ENCODE measurements at regions of chr18 and their contacts with region 1.

Region 1: GRCh38 chr18:35215026-35215425 is 25.8 kb upstream of the ZNF397 start:
- DNase-seq: no peak
- H3K4me3 ChIP-seq: no peak overlapping the region
- H3K27ac ChIP-seq: no peak overlapping the region
- H3K4me1 ChIP-seq: no peaks in the 10 kb centered on the region
- H3K27me3 ChIP-seq: peaks cover 3 to 10% of the 10 kb centered on the region in 2 experiments
- CTCF ChIP-seq: no peak
- POLR2A ChIP-seq: no peak

Region 2: GRCh38 chr18:35110554-35111485 is 104.2 kb before region 1 on chr18:
- CTCF ChIA-PET with region 1: no interaction called
- POLR2A ChIA-PET with region 1: no interaction called
- dilution Hi-C with region 1: no loop called
- intact Hi-C with region 1: no loop called
- DNase-seq: peak; percentile 86
- H3K4me3 ChIP-seq: no peak overlapping the region
- H3K27ac ChIP-seq: no peak overlapping the region
- H3K4me1 ChIP-seq: peaks cover 11% of the 10 kb centered on the region
- H3K27me3 ChIP-seq: no peaks in the 10 kb centered on the region
- CTCF ChIP-seq: no peak
- POLR2A ChIP-seq: no peak

Region 3: DNA sequence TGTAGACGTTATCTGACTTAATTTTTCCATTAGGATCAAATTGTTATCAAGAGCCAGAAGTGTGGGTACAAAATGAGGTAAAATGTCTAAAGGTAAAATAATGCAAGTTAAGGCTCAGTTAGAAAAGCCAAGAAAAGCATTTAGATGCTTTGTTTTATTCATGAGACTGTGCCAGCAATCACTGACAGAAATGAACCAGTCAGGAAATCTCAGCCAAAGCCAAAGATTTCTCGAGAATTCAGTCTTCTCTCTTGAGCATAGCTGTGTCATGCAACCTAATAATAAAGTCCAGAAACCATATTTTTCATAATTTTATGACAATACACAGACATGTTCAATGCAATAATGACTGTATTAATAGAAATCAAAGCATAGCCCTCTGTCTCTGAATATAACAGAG is 17.7 kb before region 1 on chr18:
- CTCF ChIA-PET with region 1: interaction called, 4 read pairs
- POLR2A ChIA-PET with region 1: no interaction called
- dilution Hi-C with region 1: no loop called
- intact Hi-C with region 1: loop called (anchors 2 kb)
- DNase-seq: no peak
- H3K4me3 ChIP-seq: no peak overlapping the region
- H3K27ac ChIP-seq: no peak overlapping the region
- H3K4me1 ChIP-seq: no peaks in the 10 kb centered on the region
- H3K27me3 ChIP-seq: no peaks in the 10 kb centered on the region
- CTCF ChIP-seq: no peak
- POLR2A ChIP-seq: no peak